OCI-LY7 (cell line): ENCODE measurements at regions of chr2 and their contacts with region 1.

Region 1: DNA sequence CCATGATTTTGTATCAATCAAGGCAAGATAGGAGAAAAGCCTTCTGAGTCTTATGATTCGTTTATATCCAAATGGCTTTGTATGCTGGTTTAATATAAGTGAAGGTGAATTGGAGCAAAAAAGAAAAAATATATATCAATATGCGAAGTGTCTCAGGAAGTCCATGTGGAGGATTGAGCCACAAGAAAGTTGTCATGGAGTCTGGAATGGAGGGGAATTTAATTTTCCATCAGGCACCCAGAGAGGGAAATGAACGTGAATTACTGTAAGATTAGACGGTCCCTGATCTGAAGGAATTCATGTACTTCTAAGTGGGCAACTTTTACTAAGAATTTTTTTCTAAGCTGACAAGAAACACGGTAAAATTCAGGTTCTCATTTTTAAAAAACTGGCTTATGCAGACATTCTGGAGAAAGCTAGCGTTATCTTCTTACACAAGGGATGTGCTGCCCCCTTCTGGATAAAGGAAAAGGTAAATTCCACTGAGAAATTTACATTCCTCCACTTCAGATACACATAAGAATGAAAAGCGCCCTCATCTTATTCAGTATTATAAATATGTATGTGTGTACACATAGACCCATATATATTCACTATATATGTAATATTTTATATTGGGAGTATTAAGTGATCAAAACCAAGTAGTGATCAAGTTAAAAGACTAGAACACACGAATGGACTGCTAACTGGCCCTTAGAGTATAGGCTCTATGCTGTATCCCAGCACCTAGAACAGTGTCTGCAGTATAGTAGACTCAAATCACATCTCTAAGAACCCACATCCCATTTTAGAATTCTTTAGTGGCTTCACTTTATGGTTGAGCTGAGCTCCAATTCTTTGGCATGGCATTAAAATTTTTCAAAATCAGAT is 289.0 kb upstream of the TFPI start:
- DNase-seq: peak; percentile 45
- H3K4me3 ChIP-seq: no peak overlapping the region
- H3K27ac ChIP-seq: no peak overlapping the region
- H3K4me1 ChIP-seq: no peaks in the 10 kb centered on the region
- CTCF ChIP-seq: peak; percentile 79

Region 2: DNA sequence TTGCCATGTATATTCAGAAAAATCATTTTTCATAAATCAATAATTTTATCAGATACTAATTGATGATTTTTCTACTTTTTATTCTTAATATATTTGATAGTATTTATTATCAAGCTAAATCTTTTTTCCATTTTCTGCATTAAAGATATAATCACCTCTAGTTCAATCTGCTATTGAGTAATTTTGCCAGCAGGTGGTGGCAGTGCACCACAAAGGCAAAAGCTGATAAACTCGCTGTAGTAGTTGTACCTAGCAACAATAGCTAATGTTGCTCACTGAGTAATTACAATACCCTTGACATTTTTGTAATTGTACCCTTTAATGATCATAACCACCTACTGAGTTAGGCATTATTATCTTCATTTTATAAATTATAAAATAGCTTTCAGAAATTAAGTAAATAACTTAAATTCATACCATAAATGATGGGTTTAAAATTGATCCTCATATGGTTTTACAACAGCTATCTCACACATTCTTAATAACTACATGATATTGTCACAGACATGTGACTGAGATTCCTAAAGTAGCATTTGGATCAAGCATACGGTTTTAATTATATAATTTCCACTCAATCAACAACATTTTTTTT is 343.2 kb before region 1 on chr2:
- CTCF ChIA-PET with region 1: no interaction called
- POLR2A ChIA-PET with region 1: no interaction called
- intact Hi-C with region 1: loop called (anchors 1 kb)
- DNase-seq: peak; percentile 50
- H3K4me3 ChIP-seq: no peak overlapping the region
- H3K27ac ChIP-seq: no peak overlapping the region
- H3K4me1 ChIP-seq: no peaks in the 10 kb centered on the region
- CTCF ChIP-seq: peak; percentile 89

Region 3: GRCh38 chr2:187574969-187575750 is 268.1 kb before region 1 on chr2:
- CTCF ChIA-PET with region 1: no interaction called
- POLR2A ChIA-PET with region 1: no interaction called
- intact Hi-C with region 1: loop called (anchors 5 kb)
- DNase-seq: no peak
- H3K4me3 ChIP-seq: no peak overlapping the region
- H3K27ac ChIP-seq: no peak overlapping the region
- H3K4me1 ChIP-seq: no peaks in the 10 kb centered on the region
- CTCF ChIP-seq: no peak

Region 4: GRCh38 chr2:187875261-187876141 is 32.3 kb after region 1 on chr2:
- CTCF ChIA-PET with region 1: no interaction called
- POLR2A ChIA-PET with region 1: no interaction called
- intact Hi-C with region 1: no loop called
- DNase-seq: no peak
- H3K4me3 ChIP-seq: no peak overlapping the region
- H3K27ac ChIP-seq: no peak overlapping the region
- H3K4me1 ChIP-seq: no peaks in the 10 kb centered on the region
- CTCF ChIP-seq: no peak